ENCODE measurements at regions of chr15 and their contacts with region 1.

Region 1: GRCh38 chr15:88620995-88621772 is at the start of gene AEN:
- DNase-seq: peak; percentile 99
- H3K4me3 Mint-ChIP-seq: peak within 1 kb of the TSS; percentile 94
- H3K27ac Mint-ChIP-seq: peak within 1 kb of the TSS; percentile 93
- H3K4me1 Mint-ChIP-seq: peaks cover 42% of the 10 kb centered on the region
- H3K27me3 Mint-ChIP-seq: peaks cover under 1% of the 10 kb centered on the region
- total RNA-seq, gene AEN: 72.4 and 75.7 TPM in 2 replicates

Region 2: DNA sequence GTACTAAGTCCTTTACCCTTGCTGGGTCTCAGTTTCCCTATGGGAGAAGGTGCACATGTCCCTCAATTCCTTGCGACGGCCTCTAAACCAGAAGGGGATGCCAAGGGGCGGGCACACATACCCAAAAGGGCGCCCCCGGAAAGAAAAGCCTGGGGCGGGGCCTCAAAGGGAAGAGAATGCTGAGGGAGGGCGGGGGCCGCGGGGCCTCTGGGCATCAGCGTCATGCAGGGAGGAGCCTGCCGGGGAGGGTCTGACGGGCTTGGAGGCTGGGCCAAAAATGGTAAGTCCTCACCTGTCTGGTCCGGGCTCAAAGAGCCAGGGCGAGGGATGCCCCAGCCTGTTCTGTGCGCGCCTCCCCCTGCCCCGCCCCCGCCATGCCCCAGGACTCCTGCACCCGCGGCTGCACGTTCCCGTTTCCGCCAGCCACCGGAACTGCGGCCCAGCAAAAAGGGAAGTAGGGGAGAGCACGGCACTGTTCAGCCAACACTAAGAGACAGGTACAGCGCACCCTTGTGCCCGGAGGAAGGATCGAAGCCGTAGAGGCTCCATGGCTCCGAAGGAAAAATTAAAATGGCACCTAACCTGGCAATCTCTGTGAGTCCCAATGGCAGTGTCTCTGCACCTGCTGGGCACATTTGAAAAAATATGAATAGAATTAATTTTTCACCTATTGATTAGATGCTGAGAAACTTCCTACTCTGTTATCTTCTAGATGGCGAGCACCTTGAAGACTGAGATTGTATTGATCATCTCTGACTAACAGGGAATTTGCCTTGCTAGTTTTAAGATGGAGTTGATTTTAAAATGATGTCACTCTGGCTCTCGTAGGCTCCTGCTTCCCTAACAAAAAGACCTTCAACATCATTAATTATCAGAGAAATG is 74.7 kb before region 1 on chr15 and contains the start of gene DET1:
- intact Hi-C with region 1: loop called (anchors 1 kb)
- DNase-seq: peak; percentile 97
- H3K4me3 Mint-ChIP-seq: peak within 1 kb of the TSS; percentile 92
- H3K27ac Mint-ChIP-seq: peak within 1 kb of the TSS; percentile 91
- H3K4me1 Mint-ChIP-seq: peaks cover 12% of the 10 kb centered on the region
- H3K27me3 Mint-ChIP-seq: no peaks in the 10 kb centered on the region
- total RNA-seq, gene DET1: 2.1 and 2.8 TPM in 2 replicates

Region 3: GRCh38 chr15:88631464-88632028 is 10.4 kb after region 1 on chr15:
- intact Hi-C with region 1: no loop called
- DNase-seq: no peak
- H3K4me3 Mint-ChIP-seq: no peak overlapping the region
- H3K27ac Mint-ChIP-seq: no peak overlapping the region
- H3K4me1 Mint-ChIP-seq: peaks cover 69% of the 10 kb centered on the region
- H3K27me3 Mint-ChIP-seq: no peaks in the 10 kb centered on the region

Region 4: DNA sequence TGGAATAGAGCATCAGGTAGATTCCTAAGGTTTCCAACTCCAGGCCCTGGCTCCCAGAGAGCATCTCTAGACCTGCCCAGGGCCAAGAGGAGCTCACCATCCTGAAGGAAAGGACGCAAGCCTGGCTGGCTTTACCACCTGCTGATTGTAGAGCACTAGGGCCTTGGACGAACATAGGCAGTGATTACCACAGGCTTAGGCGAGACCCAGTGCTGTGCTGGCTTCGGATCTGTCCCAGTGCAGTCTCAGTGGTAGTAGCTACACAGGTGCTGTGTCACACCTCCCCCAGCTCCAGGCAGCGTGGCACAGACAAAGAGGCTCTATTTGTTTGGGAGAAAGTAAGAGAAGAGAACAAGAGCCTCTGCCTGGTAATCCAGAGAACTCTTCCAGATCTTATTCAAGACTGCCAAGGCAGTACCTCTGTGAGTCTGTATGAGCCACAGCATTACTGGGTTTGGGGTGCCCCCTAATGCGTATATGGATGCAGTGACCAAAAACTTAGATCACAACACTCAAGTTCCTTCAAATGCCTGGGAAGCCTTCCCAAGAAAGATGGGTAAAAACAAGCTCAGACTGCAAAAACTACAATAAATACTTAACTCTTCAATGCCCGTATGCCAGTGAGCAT is 43.1 kb after region 1 on chr15:
- intact Hi-C with region 1: loop called (anchors 1 kb)
- DNase-seq: peak; percentile 83
- H3K4me3 Mint-ChIP-seq: no peak overlapping the region
- H3K27ac Mint-ChIP-seq: peak overlapping the region; percentile 26
- H3K4me1 Mint-ChIP-seq: peaks cover 4% of the 10 kb centered on the region
- H3K27me3 Mint-ChIP-seq: peaks cover 8% of the 10 kb centered on the region

Region 5: DNA sequence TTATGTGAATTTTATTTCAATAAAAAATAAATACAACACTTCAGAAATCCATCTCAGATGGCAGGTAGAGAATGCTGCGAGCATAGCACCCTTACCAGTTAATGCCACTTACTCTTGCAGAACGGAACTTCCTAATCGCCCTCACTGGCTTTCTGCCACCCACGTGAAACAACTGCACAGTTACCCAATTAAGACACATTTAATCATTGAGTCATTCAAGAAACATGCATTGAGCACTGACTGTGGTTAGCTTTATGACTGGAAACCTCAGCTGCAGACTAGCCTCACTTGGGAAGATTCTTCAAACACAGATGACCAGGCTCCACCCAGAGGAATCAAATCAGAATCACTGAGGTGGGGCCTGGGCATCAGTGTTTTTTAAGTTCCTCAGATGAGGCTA is 297.6 kb after region 1 on chr15:
- intact Hi-C with region 1: loop called (anchors 1 kb)
- DNase-seq: no peak
- H3K4me3 Mint-ChIP-seq: peak overlapping the region; percentile 23
- H3K27ac Mint-ChIP-seq: peak overlapping the region; percentile 5
- H3K4me1 Mint-ChIP-seq: peaks cover 23% of the 10 kb centered on the region
- H3K27me3 Mint-ChIP-seq: peaks cover 9% of the 10 kb centered on the region